PC-9 (cell line): ENCODE measurements at regions of chr1 and their contacts with region 1.

Region 1: DNA sequence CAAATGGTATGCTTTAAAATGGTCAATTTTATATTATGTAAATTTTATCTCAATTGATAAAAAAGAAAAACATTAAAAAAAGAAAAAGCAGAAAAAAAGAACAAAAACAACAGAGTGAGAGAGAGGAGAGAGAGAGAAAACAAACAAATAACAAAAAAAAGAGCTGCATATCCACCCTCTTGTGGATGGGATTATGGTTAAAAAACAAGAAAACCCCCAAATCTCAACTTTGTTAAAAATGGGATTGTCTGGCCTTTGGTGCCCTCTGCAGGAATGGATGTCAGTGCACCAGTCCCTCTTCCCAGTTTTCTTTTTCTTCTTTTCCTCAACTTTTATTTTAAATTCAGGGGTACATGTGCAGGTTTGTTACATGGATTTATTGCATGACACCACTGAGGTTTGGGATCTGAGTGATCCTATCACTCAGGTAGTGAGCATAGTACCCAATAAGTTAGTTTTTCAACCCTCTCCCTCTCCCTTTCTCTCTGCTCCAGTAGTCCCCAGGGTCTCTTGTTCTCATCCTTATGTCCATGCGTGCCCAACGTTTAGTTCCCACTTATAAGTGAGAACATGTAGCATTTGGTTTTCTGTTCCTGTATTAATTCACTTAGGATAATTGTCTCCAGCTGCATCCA is 28.1 kb downstream of the RNF187 start:
- DNase-seq: peak in 1 of 2 experiments; percentile 46
- H3K4me3 ChIP-seq: no peak overlapping the region
- H3K27ac ChIP-seq: no peak overlapping the region
- H3K4me1 ChIP-seq: no peaks in the 10 kb centered on the region
- H3K27me3 ChIP-seq: peaks cover 27% of the 10 kb centered on the region
- CTCF ChIP-seq: peak; percentile 87

Region 2: DNA sequence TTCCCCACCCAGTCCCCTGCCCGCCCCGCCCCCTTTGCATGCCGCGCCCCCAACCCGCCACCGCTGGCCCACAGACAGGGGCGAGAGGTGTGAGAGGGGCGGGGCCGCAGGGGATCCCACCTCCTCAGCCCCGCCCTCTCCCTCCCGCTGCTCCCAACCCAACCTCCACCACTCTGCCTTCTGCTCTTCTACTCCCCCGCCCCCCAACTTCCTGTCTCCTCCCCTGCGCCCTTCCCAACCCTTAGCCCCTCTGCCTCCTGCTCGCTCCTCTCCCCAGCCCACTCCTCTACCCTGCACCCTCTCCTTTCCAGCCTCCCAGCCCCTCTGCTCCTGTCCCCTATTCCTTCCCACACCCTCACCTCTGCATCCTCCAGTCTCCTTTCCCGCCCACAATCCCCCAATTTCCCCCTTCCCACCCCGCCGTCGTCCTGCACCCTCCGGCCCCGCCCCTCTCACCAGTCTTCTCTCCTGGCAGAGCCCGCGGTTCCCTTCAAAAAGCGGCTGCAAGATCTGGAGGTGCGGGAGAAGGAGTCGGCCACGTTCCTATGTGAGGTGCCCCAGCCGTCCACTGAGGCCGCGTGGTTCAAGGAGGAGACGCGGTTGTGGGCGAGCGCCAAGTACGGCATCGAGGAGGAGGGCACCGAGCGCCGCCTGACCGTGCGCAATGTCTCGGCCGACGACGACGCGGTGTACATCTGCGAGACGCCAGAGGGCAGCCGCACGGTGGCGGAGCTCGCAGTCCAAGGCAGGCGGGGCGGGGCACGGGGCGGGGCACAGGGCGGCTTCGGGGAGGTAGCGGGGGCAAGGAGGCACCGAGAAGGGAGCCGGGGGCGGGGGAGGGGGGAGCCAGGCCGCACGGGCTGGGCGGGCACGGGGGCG is 302.1 kb before region 1 on chr1:
- CTCF ChIA-PET with region 1: no interaction called
- POLR2A ChIA-PET with region 1: no interaction called
- intact Hi-C with region 1: loop called (anchors 5 kb)
- DNase-seq: peak; percentile 71 to 88
- H3K4me3 ChIP-seq: peak overlapping the region; percentile 62
- H3K27ac ChIP-seq: no peak overlapping the region
- H3K4me1 ChIP-seq: peaks cover 9% of the 10 kb centered on the region
- H3K27me3 ChIP-seq: no peaks in the 10 kb centered on the region
- CTCF ChIP-seq: peak; percentile 60

Region 3: GRCh38 chr1:228265167-228265566 is 250.2 kb before region 1 on chr1:
- CTCF ChIA-PET with region 1: interaction called, 3 read pairs
- POLR2A ChIA-PET with region 1: no interaction called
- intact Hi-C with region 1: loop called (anchors 5 kb)
- DNase-seq: no peak
- H3K4me3 ChIP-seq: no peak overlapping the region
- H3K27ac ChIP-seq: no peak overlapping the region
- H3K4me1 ChIP-seq: no peaks in the 10 kb centered on the region
- H3K27me3 ChIP-seq: no peaks in the 10 kb centered on the region
- CTCF ChIP-seq: peak; percentile 47; the same call in 1 of the 2 replicates

Region 4: DNA sequence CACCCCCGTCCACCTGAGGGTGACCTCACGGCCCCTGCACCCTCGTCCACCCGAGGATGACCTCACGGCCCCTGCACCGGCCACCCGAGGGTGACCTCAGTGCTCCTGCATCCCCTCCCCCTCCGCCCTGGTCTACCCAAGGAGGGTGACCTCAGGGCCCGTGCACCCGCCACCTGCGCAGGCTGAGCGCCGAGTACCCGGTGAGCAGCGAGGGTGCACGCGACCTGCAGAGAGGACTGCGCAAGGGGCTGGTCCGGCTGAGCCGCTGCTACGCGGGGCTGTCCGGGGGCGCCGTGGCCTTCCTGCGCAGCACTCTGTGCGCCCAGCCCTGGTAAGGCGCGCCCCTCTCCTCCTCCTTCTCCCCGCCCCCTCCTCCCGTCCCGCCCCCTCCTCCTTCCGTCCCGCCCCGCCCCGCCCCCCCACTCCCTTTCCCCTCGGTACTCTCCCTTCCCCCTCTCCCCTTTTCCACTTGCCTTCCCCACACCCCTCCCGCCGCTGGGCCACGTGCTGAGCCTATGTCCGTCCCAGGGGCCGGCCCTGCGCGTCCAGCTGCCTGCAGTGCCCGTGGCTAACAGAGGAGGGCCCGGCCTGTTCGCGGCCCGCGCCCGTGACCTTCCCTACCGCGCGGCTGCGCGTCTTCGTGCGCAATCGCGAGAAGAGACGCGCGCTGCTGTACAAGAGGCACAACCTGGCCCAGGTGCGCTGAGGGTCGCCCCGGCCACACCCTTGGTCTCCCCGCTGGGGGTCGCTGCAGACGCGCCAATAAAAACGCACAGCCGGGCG is 137.0 kb before region 1 on chr1:
- CTCF ChIA-PET with region 1: no interaction called
- POLR2A ChIA-PET with region 1: no interaction called
- intact Hi-C with region 1: loop called (anchors 1 kb)
- DNase-seq: peak; percentile 78 to 95
- H3K4me3 ChIP-seq: peak overlapping the region; percentile 67
- H3K27ac ChIP-seq: no peak overlapping the region
- H3K4me1 ChIP-seq: peaks cover 15% of the 10 kb centered on the region
- H3K27me3 ChIP-seq: no peaks in the 10 kb centered on the region
- CTCF ChIP-seq: peak; percentile 82

Region 5: GRCh38 chr1:228471762-228472398 is 43.4 kb before region 1 on chr1:
- CTCF ChIA-PET with region 1: interaction called, 13 read pairs
- POLR2A ChIA-PET with region 1: no interaction called
- intact Hi-C with region 1: no loop called
- DNase-seq: peak in 1 of 2 experiments; percentile 46
- H3K4me3 ChIP-seq: no peak overlapping the region
- H3K27ac ChIP-seq: no peak overlapping the region
- H3K4me1 ChIP-seq: no peaks in the 10 kb centered on the region
- H3K27me3 ChIP-seq: 0 out of 2 replicates have a peak, but pooled peaks cover 4% of the 10 kb centered on the region
- CTCF ChIP-seq: peak; percentile 68